ENCODE measurements at regions of chr12 and their contacts with region 1.

Region 1: DNA sequence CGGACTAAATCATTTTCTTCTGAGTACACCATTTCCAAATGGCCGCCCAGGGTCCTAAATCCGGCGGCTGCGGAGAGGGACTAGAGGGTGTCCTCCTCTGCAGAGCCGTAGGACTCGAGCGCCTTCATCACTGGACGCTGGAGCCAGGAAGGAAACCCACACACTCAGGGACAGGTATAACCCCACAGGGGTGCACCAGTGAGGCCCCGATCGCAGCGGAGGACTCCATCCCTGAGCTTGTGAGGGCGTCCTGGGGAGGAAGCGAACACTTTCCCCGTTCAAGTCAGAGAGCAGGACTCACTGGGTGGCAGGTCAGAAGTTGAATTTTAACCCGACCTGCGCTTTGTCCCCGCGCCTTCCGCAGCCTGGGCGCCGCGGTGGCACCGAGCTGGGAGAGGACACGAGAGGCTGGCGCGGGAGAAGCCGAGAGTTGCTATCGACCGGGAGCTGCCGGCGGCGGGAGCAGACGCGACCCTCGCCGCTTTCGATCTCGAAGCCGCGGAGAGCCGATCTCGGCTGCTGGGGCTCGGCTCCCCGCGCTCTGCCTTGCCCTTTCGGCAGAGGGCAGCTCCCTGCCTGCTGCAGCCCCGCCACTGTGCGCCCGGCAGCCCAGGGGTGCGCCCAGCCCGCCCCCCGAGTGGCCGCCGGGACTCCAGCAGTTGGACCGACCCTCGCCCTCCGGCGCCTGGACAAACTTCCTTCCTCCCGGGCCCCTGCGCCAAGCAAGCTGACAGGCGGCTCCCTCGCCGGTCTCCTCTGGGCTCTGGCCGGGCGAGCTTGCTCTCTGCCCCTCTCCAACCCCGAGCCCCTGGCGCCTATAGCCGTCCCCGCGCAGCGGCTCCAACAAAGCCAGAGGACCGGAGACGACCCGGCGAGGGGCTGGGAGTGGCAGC is 990 bp downstream of the LIN7A start:
- DNase-seq: peak; percentile 32 to 73 (median 49)
- ATAC-seq: peak; percentile 68 to 85 (median 80)
- H3K4me3 ChIP-seq: peak overlapping the region; percentile 70 to 87 (median 78)
- H3K27ac ChIP-seq: peak overlapping the region; percentile 90 to 97 (median 95)
- H3K4me1 ChIP-seq: peaks cover 0 to 18% (median 8%) of the 10 kb centered on the region in 12 donors
- H3K27me3 ChIP-seq: peaks cover 0 to 3% (median 0%) of the 10 kb centered on the region in 9 donors
- CTCF ChIP-seq: peak in 1 of 12 donors; percentile 11
- POLR2A ChIP-seq: no peak

Region 2: DNA sequence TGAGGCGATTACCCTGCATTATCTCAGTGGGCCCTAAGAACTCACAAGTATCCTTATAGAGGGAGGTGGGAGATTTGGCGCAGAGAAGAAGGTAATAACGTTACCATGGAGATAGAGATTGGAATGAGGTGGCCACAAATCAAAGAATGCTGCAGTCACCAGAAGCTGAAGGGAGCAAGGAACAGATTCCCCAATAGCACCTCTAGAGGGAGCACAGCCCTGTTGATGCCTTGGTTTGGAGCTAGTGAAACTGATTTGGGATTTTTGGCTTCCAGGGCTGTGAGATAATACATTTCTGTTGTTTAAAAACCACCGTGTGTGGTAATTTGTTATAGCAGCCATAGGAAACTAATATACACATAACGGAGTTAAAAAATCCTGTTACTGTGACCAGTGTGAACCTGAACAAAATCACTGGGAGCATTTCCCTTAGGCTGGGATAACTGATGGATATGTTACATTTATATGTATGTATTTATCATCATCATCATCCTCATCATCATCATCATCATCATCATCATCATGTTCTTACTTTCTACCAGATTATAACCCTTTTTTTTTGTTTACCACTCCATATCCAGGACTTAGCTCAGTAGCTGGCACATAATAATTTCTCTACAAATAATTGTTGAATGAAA is 99.3 kb before region 1 on chr12:
- intact Hi-C with region 1: loop called in 8 of 10 experiments (anchors 2 to 10 kb)
- DNase-seq: peak in 1 of 5 donors; percentile 20
- ATAC-seq: peak; percentile 71 to 94 (median 79)
- H3K4me3 ChIP-seq: no peak overlapping the region
- H3K27ac ChIP-seq: peak overlapping the region in 1 of 12 donors; percentile 32
- H3K4me1 ChIP-seq: peaks cover 0 to 21% (median 7%) of the 10 kb centered on the region in 12 donors
- H3K27me3 ChIP-seq: no peaks in the 10 kb centered on the region
- CTCF ChIP-seq: peak; percentile 51 to 78 (median 68)
- POLR2A ChIP-seq: no peak

Region 3: GRCh38 chr12:80877721-80878265 is 59.0 kb before region 1 on chr12:
- intact Hi-C with region 1: loop called in 5 of 10 experiments (anchors 2 to 10 kb)
- DNase-seq: no peak
- ATAC-seq: peak; percentile 83 to 92 (median 90)
- H3K4me3 ChIP-seq: peak overlapping the region in 8 of 12 donors; percentile 3 to 36 (median 23)
- H3K27ac ChIP-seq: peak overlapping the region; percentile 68 to 88 (median 81)
- H3K4me1 ChIP-seq: peaks cover 0 to 33% (median 12%) of the 10 kb centered on the region in 12 donors
- H3K27me3 ChIP-seq: no peaks in the 10 kb centered on the region
- CTCF ChIP-seq: no peak
- POLR2A ChIP-seq: no peak